GM12878 (cell line): ENCODE measurements at regions of chr1 and their contacts with region 1.

Region 1: DNA sequence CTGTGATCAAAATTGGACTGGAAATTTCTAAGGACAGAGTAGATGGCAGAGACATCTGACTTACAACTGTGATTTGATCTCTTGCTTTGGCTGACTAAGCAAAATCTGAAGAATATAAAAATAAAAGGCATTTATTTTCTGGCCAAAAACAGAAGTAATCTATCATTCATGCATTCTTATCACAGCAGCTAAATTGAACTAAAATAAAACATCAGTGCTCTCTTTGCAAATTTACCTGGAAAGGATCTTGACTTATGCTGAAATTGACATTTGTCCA is 81.4 kb upstream of the ZNF678 start:
- DNase-seq: no peak
- ATAC-seq: no peak
- H3K4me3 ChIP-seq: no peak overlapping the region
- H3K27ac ChIP-seq: no peak overlapping the region
- H3K4me1 ChIP-seq: no peaks in the 10 kb centered on the region
- H3K27me3 ChIP-seq: no peaks in the 10 kb centered on the region
- CTCF ChIP-seq: no peak
- EP300 ChIP-seq: no peak
- POLR2A ChIP-seq: no peak
- RAD21 ChIP-seq: no peak

Region 2: DNA sequence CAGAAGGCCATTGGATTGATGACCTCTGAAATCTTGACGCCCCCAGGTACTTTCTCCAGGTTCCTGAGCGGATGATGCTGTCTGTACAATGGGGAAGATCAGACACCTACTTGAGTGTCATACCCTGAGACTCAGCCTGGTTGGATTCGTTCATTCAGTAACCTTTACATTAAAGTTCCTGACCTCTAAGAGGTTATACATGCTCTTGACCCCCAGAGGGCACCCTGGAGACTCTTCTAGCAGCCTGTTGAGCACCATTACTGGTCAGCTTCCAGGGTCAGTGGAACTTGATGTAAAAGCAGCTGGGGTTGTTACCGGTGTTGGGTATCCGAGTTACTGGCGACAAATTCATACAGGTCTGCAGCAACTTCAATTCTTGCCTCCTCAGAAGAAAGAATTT is 32.9 kb before region 1 on chr1:
- CTCF ChIA-PET with region 1: no interaction called
- POLR2A ChIA-PET with region 1: no interaction called
- RAD21 ChIA-PET with region 1: no interaction called
- SMC1A ChIA-PET with region 1: no interaction called
- in situ Hi-C with region 1: no loop called
- intact Hi-C with region 1: no loop called
- DNase-seq: no peak
- ATAC-seq: peak; percentile 76
- H3K4me3 ChIP-seq: no peak overlapping the region
- H3K27ac ChIP-seq: no peak overlapping the region
- H3K4me1 ChIP-seq: no peaks in the 10 kb centered on the region
- H3K27me3 ChIP-seq: no peaks in the 10 kb centered on the region
- CTCF ChIP-seq: peak; percentile 45 to 51 (median 51); a peak in 5 of 6 replicates
- EP300 ChIP-seq: no peak
- POLR2A ChIP-seq: no peak
- RAD21 ChIP-seq: peak; percentile 40; the same call in 1 of the 2 replicates

Region 3: GRCh38 chr1:227542143-227543120 is 60.5 kb after region 1 on chr1:
- CTCF ChIA-PET with region 1: interaction called, 21 read pairs
- POLR2A ChIA-PET with region 1: no interaction called
- RAD21 ChIA-PET with region 1: no interaction called
- SMC1A ChIA-PET with region 1: no interaction called
- in situ Hi-C with region 1: no loop called
- intact Hi-C with region 1: loop called (anchors 1 kb)
- DNase-seq: peak; percentile 26
- ATAC-seq: peak; percentile 97
- H3K4me3 ChIP-seq: peak overlapping the region; percentile 58; the same call in 1 of the 2 replicates
- H3K27ac ChIP-seq: peak overlapping the region; percentile 33; the same call in 1 of the 2 replicates
- H3K4me1 ChIP-seq: peaks cover 3% of the 10 kb centered on the region; the same call in 1 of the 2 replicates
- H3K27me3 ChIP-seq: no peaks in the 10 kb centered on the region
- CTCF ChIP-seq: peak; percentile 89 to 94 (median 90)
- EP300 ChIP-seq: no peak
- POLR2A ChIP-seq: no peak
- RAD21 ChIP-seq: peak; percentile 48